ENCODE measurements at regions of chr2 and their contacts with region 1.

Region 1: DNA sequence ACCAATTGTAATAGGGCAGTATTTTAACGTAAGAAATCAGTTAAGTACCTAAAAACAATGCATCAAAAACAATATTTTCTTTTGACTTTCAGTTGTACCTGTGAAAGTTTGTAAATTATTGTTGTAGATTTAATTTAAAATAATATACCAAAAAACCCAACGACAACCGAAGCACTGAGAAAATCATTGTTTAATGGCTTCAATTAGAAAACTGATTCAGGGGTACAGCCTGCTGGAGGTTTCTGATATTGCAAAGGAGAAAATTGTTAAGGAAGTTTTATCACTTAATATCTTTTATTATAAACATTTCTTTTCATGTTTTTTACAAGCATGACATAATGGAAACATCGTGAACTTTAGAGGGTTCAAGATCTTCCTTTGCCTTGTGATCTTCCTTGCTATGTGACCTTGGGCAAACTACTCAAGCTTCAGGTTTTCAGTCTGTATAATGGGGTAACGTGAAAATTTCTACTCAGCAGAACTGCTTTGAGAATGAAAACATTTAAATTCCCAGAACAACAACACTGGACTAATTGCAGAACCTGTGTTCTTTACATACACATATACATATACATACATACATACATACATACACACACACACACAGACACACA is 76.3 kb upstream of the GLS start:
- DNase-seq: no peak
- ATAC-seq: no peak
- H3K4me3 Mint-ChIP-seq: no peak overlapping the region
- H3K27ac Mint-ChIP-seq: no peak overlapping the region
- H3K4me1 Mint-ChIP-seq: peaks cover 14% of the 10 kb centered on the region
- H3K27me3 Mint-ChIP-seq: no peaks in the 10 kb centered on the region

Region 2: GRCh38 chr2:190088917-190089316 is 715.4 kb before region 1 on chr2:
- CTCF ChIA-PET with region 1: no interaction called
- POLR2A ChIA-PET with region 1: no interaction called
- intact Hi-C with region 1: loop called (anchors 2 to 5 kb)
- DNase-seq: peak; percentile 64
- ATAC-seq: peak; percentile 69
- H3K4me3 Mint-ChIP-seq: no peak overlapping the region
- H3K27ac Mint-ChIP-seq: no peak overlapping the region
- H3K4me1 Mint-ChIP-seq: no peaks in the 10 kb centered on the region
- H3K27me3 Mint-ChIP-seq: no peaks in the 10 kb centered on the region

Region 3: GRCh38 chr2:190382851-190383250 is 421.4 kb before region 1 on chr2:
- CTCF ChIA-PET with region 1: interaction called, 5 read pairs
- POLR2A ChIA-PET with region 1: no interaction called
- intact Hi-C with region 1: loop called (anchors 1 kb)
- DNase-seq: peak; percentile 36
- ATAC-seq: peak; percentile 88
- H3K4me3 Mint-ChIP-seq: no peak overlapping the region
- H3K27ac Mint-ChIP-seq: no peak overlapping the region
- H3K4me1 Mint-ChIP-seq: no peaks in the 10 kb centered on the region
- H3K27me3 Mint-ChIP-seq: no peaks in the 10 kb centered on the region

Region 4: DNA sequence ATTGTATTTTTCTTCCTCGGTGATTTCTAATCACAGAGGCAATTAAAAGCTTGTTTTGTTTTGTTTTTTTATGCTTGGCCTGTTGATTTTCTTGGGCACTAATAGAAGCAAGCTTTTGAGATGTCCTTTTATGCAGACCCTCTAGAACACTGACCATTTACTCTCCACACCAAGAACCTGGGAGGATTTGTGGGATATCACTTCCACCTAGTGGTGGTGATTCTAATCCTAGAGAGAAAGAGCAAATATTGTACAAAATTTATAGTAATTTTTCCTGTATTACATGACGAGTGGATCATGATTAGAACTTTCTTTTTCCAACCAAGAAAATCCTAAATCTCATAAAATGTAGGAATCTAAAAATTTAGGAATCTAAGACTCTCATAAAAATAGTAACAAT is 293.2 kb before region 1 on chr2:
- CTCF ChIA-PET with region 1: no interaction called
- POLR2A ChIA-PET with region 1: no interaction called
- intact Hi-C with region 1: loop called in 1 of 2 experiments (anchors 10 kb)
- DNase-seq: no peak
- ATAC-seq: no peak
- H3K4me3 Mint-ChIP-seq: no peak overlapping the region
- H3K27ac Mint-ChIP-seq: no peak overlapping the region
- H3K4me1 Mint-ChIP-seq: peaks cover 24% of the 10 kb centered on the region
- H3K27me3 Mint-ChIP-seq: no peaks in the 10 kb centered on the region

Region 5: GRCh38 chr2:190636373-190636772 is 167.9 kb before region 1 on chr2:
- CTCF ChIA-PET with region 1: no interaction called
- POLR2A ChIA-PET with region 1: no interaction called
- intact Hi-C with region 1: loop called in 1 of 2 experiments (anchors 2 kb)
- DNase-seq: no peak
- ATAC-seq: no peak
- H3K4me3 Mint-ChIP-seq: no peak overlapping the region
- H3K27ac Mint-ChIP-seq: no peak overlapping the region
- H3K4me1 Mint-ChIP-seq: peaks cover 11% of the 10 kb centered on the region
- H3K27me3 Mint-ChIP-seq: no peaks in the 10 kb centered on the region

Region 6: DNA sequence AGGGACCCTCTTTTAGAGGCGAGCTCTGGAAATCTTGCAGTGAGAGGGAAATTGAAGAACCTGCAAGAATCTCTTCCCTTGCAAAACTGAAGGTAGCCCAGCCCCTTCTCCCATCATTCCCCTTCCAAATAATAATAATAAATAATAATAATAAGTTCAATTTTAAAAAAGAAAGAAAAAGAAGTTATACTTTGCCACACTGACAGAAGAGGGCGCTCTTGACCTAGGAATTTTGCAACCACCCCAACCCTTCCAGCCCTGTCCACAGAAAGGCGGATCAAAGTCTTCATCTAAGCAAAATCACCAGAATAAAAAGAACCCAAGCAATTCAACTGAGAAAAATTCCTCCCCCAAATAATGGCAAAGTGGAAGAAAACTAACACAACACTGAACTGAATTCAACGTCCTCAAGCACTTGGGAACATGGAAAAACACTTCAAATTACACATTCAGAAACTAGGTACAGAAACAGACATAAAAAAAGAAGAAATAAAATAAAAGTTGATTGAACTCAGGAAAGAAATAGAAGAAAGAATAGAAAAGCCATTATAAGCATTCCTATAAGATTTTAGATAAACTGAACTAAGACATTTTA is 22.6 kb before region 1 on chr2:
- CTCF ChIA-PET with region 1: interaction called, 18 read pairs
- POLR2A ChIA-PET with region 1: no interaction called
- intact Hi-C with region 1: loop called (anchors 1 kb)
- DNase-seq: peak; percentile 77
- ATAC-seq: peak; percentile 58
- H3K4me3 Mint-ChIP-seq: no peak overlapping the region
- H3K27ac Mint-ChIP-seq: no peak overlapping the region
- H3K4me1 Mint-ChIP-seq: peaks cover 33% of the 10 kb centered on the region
- H3K27me3 Mint-ChIP-seq: no peaks in the 10 kb centered on the region

Region 7: GRCh38 chr2:190791347-190791975 is 12.8 kb before region 1 on chr2:
- CTCF ChIA-PET with region 1: interaction called, 14 read pairs
- POLR2A ChIA-PET with region 1: interaction called, 3 read pairs
- intact Hi-C with region 1: no loop called
- DNase-seq: peak; percentile 73
- ATAC-seq: peak; percentile 70
- H3K4me3 Mint-ChIP-seq: peak overlapping the region; percentile 11
- H3K27ac Mint-ChIP-seq: peak overlapping the region; percentile 77
- H3K4me1 Mint-ChIP-seq: peaks cover 49% of the 10 kb centered on the region
- H3K27me3 Mint-ChIP-seq: no peaks in the 10 kb centered on the region

Region 8: DNA sequence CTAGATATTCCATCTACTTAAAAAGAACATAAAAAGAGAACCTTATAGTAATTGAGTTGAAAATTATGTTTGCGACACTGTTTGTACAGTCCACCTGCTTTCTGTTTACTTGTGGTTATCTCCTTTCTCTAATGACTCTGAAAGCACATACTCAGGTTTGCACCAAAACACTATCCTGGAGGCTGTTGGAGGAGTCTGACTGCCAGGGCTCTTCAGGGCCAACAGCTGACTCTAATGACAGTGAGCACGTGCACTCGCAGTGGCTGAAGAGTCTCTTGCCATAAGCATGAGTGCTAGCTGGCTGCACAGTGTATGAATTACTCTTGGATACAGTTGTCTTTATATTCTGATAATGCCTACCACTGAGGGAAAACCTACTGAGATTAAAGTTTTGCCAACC is 59.7 kb after region 1 on chr2:
- CTCF ChIA-PET with region 1: no interaction called
- POLR2A ChIA-PET with region 1: no interaction called
- intact Hi-C with region 1: no loop called
- DNase-seq: no peak
- ATAC-seq: no peak
- H3K4me3 Mint-ChIP-seq: no peak overlapping the region
- H3K27ac Mint-ChIP-seq: no peak overlapping the region
- H3K4me1 Mint-ChIP-seq: peaks cover 26% of the 10 kb centered on the region
- H3K27me3 Mint-ChIP-seq: no peaks in the 10 kb centered on the region

Measured in activated CD4-positive, alpha-beta T cell treated with anti-CD3 and anti-CD28 coated beads for 36 hours (primary cell).